Common myeloid progenitor, CD34-positive (primary cell): ENCODE measurements at regions of chr5 and their contacts with region 1.

Region 1: DNA sequence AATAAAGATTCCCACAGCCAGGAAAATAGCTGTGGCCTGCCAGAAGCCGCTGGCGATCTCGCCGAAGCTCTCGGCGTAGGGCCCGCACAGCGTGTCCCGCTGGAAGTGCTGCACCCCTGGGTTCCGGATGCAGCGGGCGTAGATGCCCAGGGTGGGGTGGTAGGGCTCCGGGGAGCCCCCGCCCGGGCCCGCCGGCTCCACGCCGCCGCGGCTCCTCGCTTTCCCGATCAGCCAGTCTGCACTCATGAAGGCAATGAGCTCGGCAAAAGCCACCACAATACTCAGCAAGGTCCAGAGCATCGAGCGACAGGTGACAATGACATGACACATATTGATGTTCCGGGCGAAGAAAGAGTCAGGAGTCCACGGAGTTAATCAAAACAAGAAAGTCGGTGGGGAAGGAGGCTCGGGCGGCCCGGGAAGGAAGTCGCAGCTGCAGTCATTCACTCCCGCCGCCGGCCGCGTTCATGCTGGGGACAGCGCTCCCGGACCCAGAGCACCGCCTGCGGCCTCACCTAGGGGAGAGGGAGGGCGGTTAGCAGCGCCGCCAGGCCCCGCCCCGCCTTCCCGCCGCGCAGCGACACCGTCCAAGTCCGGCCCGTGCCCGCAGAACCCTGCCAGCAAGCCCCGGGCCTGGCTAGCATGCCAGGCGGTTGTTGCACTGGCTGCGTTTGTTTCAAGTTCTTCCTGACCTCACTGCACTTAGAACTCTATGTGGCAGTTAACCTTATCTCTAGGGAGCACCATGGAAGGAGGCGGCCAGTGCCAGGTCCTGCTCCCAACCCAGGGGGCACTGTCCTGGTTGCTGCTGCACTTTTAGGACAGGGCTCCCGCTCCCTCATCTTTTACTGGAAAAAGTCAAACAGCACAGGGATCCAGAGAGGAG is 138.4 kb downstream of the LHFPL2 start:
- DNase-seq: peak; percentile 51 to 73 (median 59)
- H3K4me3 ChIP-seq: peak overlapping the region; percentile 73 to 97 (median 93)
- H3K27ac ChIP-seq: peak overlapping the region; percentile 56 to 76
- H3K4me1 ChIP-seq: peaks cover 48 to 66% (median 59%) of the 10 kb centered on the region in 4 experiments
- H3K27me3 ChIP-seq: no peaks in the 10 kb centered on the region

Region 2: DNA sequence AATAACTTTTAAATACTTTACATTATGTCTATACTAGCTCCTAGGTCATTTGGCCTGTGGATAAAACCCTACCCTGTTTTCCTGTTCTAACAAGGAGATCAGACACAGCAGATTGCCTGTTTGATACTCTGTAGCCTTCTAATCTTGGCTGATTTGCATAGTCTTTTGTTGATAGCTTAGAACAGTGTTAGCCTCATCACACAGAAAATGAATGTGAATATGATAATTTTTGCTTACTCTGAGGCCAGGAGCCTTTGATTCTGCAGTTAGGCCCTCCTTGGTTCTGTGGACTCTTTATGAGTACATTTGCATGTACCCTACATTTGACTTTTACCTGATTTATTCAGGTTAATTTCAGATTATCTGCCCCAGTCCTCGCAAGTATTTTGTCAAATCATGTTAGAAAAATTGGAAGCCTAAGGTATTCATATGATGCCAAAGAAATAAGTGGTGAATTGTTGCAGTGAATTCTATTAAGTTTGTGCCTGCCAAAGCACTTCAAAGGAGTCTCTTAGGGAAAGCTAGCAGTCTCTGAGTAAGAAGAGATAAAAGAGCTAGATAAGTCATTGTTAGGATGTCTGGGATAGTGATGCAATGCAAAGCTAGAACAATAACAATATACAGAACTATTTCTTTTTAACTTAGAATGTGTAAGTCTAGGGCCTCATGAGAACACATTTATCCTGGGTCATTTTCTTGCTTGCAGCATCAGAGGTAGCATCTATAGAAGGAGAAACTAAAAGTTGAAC is 93.3 kb before region 1 on chr5:
- CTCF ChIA-PET with region 1: no interaction called
- POLR2A ChIA-PET with region 1: no interaction called
- DNase-seq: no peak
- H3K4me3 ChIP-seq: no peak overlapping the region
- H3K27ac ChIP-seq: no peak overlapping the region
- H3K4me1 ChIP-seq: no peaks in the 10 kb centered on the region
- H3K27me3 ChIP-seq: no peaks in the 10 kb centered on the region

Region 3: DNA sequence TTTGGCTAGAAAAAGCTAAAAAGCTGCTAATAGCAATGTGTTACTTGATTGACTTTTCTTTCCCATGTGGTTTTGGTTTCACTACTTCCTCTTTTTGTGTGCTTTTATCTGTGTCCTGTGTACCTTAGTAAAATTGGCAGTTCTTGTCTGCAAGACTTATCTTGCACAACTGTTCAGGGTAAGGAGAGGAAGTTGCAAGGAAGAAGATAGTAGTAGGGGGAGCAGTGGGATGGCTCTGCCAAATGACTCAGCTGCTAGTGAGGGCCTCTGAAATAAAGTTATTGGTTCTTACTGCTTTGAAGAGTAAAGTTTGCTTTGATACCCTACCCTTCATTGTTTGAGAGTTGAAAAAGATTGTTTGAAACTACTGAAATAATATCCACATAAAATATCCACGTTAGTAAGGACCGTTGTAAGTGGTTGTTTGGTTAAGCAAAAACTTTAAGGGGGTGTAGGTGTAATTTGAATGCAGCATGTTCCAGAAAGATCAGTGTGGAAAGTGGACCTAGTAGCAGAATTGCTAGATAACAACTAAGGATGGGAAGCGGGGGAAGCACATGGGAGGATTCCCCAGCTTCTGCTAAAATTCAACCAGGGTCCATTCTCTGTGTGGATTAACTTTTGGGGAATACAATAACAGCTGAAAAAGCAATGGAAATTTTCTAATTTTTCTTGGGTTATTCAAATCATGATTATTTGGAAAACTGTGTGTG is 26.2 kb before region 1 on chr5:
- CTCF ChIA-PET with region 1: interaction called, 24 read pairs
- POLR2A ChIA-PET with region 1: interaction called, 8 read pairs
- DNase-seq: peak; percentile 91 to 97 (median 95)
- H3K4me3 ChIP-seq: peak overlapping the region in 3 of 7 experiments; percentile 39 to 56 (median 44)
- H3K27ac ChIP-seq: peak overlapping the region; percentile 46 to 73
- H3K4me1 ChIP-seq: peaks cover 56 to 71% (median 63%) of the 10 kb centered on the region in 4 experiments
- H3K27me3 ChIP-seq: no peaks in the 10 kb centered on the region

Region 4: DNA sequence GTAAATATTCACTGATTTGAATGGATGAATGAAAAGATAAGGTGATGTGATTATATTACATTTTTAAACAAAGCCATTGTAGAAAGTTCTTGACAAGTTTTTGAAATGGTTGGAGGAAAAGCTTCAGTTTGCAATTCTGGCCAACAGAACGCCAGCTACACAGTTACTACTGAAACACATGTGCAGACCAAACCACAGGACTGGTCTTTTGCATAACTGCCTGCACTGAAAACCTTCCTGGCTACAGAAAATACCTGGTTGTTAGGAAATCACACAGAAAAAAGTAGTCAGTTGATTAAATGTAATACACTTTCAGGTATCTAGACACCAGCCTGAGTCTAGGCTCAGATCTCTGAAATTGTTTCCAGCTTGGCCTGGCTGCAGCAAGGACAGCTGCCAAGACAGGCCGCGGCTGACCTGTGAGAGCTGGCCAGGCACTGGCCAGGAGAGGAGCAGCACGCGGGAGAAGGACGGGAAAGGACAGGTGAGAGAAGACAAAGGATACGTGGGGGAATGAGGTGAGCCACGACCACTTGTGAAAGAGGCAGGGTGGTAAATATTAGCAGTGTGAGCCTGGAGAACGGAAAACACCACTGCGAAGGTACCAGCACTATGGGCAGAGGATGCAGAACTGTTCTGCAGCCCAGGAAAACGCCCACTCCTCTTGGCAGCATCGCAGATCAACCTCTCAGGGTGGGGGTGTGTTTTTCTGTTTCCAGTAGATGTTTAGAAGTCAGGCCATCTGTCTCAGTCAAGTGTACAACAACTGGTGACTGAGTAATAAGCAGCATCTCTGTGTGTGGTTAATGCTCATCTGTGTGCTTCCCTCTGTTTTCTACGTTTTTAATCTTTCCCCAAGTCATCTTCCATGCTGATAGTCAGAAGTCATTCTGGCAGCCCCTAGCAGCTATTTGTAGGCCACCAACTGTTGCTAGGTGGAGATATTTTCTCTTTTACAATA is 12.3 kb before region 1 on chr5:
- CTCF ChIA-PET with region 1: interaction called, 33 read pairs
- POLR2A ChIA-PET with region 1: interaction called, 3 read pairs
- DNase-seq: peak in 2 of 3 donors; percentile 80 to 86
- H3K4me3 ChIP-seq: peak overlapping the region in 2 of 7 experiments; percentile 4 to 48
- H3K27ac ChIP-seq: peak overlapping the region; percentile 48 to 74
- H3K4me1 ChIP-seq: peaks cover 47 to 100% (median 72%) of the 10 kb centered on the region in 4 experiments
- H3K27me3 ChIP-seq: no peaks in the 10 kb centered on the region

Region 5: DNA sequence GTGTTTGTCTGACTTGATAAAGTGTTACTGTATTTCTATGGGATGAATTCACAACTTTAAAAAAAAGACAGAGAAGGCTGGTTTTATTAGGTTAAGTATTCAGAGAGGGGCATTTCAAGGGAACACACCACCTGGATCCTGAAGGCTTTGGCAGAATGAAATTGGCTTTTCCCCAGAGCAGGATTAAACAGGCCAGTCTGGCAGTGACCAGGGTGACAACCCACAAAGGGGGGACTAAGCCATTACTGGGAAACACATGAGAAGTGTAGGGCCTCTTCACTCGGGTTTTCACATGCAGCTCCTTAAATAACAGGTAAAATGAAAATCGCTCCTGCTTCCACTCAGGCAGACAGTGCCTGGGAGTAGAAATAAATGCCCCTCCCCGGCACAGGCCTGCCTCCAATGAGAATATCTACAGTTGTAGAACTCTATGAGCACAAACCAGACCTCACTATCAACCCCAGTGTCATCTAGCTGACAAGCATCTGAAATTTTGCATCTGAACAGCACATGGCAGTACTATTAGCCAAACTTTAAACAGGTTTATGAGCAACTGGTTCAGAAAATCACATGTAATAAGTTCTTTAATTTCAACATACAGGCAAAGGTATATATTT is 52.7 kb after region 1 on chr5:
- CTCF ChIA-PET with region 1: no interaction called
- POLR2A ChIA-PET with region 1: no interaction called
- DNase-seq: no peak
- H3K4me3 ChIP-seq: no peak overlapping the region
- H3K27ac ChIP-seq: no peak overlapping the region
- H3K4me1 ChIP-seq: no peaks in the 10 kb centered on the region
- H3K27me3 ChIP-seq: peaks cover 0 to 7% (median 0%) of the 10 kb centered on the region in 5 experiments